ENCODE measurements at regions of chr19 and their contacts with region 1.

Region 1: DNA sequence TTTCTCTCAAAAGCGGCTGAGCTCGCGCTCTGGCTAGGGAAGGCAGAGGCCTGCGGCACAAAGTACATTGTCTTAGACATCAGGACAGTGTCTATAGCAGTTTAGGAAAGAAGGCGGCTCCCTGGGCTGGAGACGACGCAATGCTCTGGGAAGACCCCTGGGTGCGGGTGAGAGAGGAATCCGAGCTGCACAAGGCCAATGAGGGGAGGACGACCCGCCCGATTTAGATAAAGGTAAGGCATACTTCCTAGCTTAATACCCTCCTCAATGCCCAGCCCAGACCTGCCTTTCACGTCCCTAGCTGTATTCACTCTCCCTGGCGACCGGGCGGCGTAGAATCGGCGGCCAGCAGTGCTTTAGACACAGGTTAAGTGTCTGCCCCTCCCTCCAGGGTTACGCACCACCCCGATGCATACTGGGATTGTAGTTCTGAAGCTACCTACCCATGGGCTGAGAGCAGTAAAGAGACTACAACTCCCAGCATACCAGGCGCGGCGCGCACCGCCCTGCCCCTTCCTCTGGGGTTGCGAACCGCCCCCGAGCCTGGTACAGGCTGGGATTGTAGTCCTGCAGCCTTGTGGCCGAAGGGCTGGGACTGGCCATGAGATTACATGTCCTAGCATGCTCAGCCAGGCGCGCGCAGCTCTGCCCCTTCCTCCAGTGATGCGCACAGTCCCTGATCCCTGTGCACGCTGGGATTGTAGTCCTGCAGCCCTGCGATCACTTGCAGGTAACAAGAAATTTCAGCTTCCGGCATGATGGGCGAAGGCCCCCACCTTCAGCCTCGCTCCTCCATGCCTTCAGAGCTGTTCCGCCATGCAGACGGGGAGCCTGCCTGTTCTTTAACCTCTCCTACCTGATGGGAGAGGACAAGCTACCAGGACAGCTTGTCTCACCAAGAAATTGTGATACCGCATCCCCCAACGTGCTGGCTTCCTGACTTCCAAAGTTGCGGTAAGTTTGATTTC is 43.4 kb upstream of the ZNF14 start:
- DNase-seq: peak; percentile 79 to 95 (median 91)
- ATAC-seq: peak; percentile 100
- H3K4me3 ChIP-seq: peak overlapping the region; percentile 91
- H3K4me3 Mint-ChIP-seq: peak overlapping the region; percentile 91 to 100 (median 98)
- H3K27ac ChIP-seq: peak overlapping the region; percentile 84
- H3K27ac Mint-ChIP-seq: peak overlapping the region; percentile 88 to 99 (median 97)
- H3K4me1 ChIP-seq: peaks cover 11 to 20% of the 10 kb centered on the region in 2 donors
- H3K4me1 Mint-ChIP-seq: peaks cover 25 to 67% (median 54%) of the 10 kb centered on the region in 7 donors
- H3K27me3 ChIP-seq: no peaks in the 10 kb centered on the region
- H3K27me3 Mint-ChIP-seq: no peaks in the 10 kb centered on the region

Region 2: GRCh38 chr19:19138169-19138981 is 638.0 kb before region 1 on chr19 and contains the start of gene TMEM161A:
- CTCF ChIA-PET with region 1: no interaction called
- POLR2A ChIA-PET with region 1: no interaction called
- intact Hi-C with region 1: loop called in 1 of 2 experiments (anchors 5 kb)
- DNase-seq: peak; percentile 84 to 96 (median 93)
- ATAC-seq: peak; percentile 100
- H3K4me3 ChIP-seq: peak within 1 kb of the TSS; percentile 84
- H3K4me3 Mint-ChIP-seq: peak within 1 kb of the TSS; percentile 83 to 100 (median 98)
- H3K27ac ChIP-seq: peak within 1 kb of the TSS; percentile 90
- H3K27ac Mint-ChIP-seq: peak within 1 kb of the TSS; percentile 84 to 97 (median 94)
- H3K4me1 ChIP-seq: peaks cover 8 to 9% of the 10 kb centered on the region in 2 donors
- H3K4me1 Mint-ChIP-seq: peaks cover 20 to 41% (median 29%) of the 10 kb centered on the region in 7 donors
- H3K27me3 ChIP-seq: no peaks in the 10 kb centered on the region
- H3K27me3 Mint-ChIP-seq: no peaks in the 10 kb centered on the region
- total RNA-seq, gene TMEM161A: 15.8 to 32.7 (median 23.5) TPM

Region 3: DNA sequence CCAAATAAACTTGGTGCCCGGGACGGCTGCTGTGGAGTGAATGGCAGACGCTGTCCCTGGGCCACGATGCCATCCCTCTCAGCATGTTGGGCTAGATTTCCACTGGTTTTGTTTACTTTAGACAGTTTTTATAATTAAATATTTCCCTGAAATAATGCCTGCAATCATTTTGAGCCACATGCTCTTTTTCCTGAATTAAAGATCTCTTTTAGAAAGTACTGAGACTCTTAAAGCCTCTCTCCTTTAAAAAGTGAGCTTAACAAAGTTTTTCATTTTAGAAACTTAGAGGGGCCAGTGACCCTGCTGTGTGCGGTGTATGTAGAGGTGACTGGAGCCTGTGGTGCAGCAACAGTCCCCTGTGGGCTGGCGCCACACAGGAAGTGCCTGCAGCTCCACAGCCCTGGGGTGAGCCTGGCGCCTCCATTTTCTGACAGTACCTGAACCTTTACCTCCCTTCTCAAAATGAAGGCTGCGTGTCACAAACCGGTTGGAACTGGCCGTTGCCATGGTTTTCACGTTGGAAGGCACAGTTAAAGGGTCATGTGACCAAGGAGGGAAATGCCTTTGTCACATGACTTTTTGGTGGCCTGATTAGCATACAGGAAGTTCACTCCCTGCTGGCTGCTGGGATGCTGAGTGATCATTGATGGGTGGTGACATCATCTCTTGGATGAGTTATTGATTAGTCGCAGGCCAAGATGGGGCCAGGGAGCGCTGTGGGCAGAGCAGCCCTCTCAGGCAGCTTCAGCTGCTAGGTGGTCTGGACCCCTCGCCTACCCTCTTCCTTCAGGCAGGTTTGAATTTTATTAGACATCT is 287.2 kb before region 1 on chr19:
- CTCF ChIA-PET with region 1: no interaction called
- POLR2A ChIA-PET with region 1: no interaction called
- intact Hi-C with region 1: loop called in 1 of 2 experiments (anchors 1 kb)
- DNase-seq: peak; percentile 63 to 97 (median 94)
- ATAC-seq: peak; percentile 90
- H3K4me3 ChIP-seq: peak overlapping the region; percentile 22
- H3K4me3 Mint-ChIP-seq: peak overlapping the region; percentile 58 to 84 (median 78)
- H3K27ac ChIP-seq: peak overlapping the region; percentile 81
- H3K27ac Mint-ChIP-seq: peak overlapping the region; percentile 96 to 99 (median 99)
- H3K4me1 ChIP-seq: peaks cover 33 to 51% of the 10 kb centered on the region in 2 donors
- H3K4me1 Mint-ChIP-seq: peaks cover 27 to 61% (median 52%) of the 10 kb centered on the region in 7 donors
- H3K27me3 ChIP-seq: no peaks in the 10 kb centered on the region
- H3K27me3 Mint-ChIP-seq: no peaks in the 10 kb centered on the region

Region 4: DNA sequence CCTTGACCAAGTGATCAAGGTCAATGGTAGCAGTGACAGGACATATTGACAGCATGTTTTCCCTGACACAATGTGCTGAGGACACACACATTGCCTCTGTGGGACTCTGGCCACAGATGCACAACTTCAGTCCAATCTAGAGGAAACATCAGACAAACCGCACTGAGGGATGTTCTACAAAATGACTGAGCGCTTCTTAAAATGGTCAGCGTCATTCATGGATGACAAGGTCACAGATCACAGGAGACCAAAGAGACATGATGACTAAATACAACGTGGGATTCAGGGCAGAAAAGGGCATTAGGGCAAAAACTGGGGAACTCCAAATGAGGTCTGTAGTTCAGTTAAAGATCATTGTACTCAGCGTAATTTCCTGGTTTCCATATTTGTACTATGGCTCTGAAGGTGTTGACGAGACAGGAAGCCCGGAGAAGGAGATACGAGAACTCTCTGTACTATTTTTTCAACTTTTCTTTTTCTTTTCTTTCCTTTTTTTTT is 178.5 kb before region 1 on chr19:
- CTCF ChIA-PET with region 1: no interaction called
- POLR2A ChIA-PET with region 1: no interaction called
- intact Hi-C with region 1: loop called in 1 of 2 experiments (anchors 2 kb)
- DNase-seq: peak in 8 of 9 donors; percentile 54 to 90 (median 84)
- ATAC-seq: peak; percentile 87
- H3K4me3 ChIP-seq: peak overlapping the region; percentile 52
- H3K4me3 Mint-ChIP-seq: peak overlapping the region; percentile 61 to 85 (median 74)
- H3K27ac ChIP-seq: peak overlapping the region; percentile 96
- H3K27ac Mint-ChIP-seq: peak overlapping the region; percentile 90 to 99 (median 97)
- H3K4me1 ChIP-seq: peaks cover 53 to 54% of the 10 kb centered on the region in 2 donors
- H3K4me1 Mint-ChIP-seq: peaks cover 29 to 75% (median 66%) of the 10 kb centered on the region in 7 donors
- H3K27me3 ChIP-seq: no peaks in the 10 kb centered on the region
- H3K27me3 Mint-ChIP-seq: no peaks in the 10 kb centered on the region

Region 5: DNA sequence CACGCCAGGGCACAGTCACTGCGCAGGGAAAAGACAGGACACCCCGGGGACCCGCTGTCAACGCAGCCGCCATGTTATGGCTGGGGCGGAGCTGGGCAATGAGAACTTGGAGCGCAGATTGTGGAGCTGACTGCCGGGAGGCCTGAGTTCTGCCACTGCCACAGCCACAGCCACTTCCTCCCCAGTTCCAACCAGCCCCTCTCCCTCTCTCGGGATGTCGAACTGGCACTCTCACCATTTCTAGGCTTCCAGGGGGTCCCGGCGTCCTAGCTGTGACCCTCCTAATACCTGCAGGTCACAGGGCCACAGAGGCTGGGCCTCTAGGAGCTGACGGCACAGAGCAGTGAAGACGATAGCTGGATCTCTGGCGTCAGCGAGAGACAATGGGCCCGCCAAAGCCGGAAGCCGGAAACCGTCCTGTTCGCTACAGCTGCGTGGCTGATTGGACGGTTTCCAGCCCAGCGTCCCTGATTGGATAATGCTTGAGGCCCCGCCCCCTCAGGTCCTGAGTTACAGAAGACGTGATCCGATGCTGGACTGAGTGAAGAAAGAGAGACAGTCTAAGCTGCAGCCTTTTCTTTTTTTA is 45.1 kb after region 1 on chr19 and contains the start of gene ZNF506:
- CTCF ChIA-PET with region 1: no interaction called
- POLR2A ChIA-PET with region 1: interaction called, 48 read pairs
- intact Hi-C with region 1: loop called (anchors 1 kb)
- DNase-seq: peak; percentile 83 to 98 (median 97)
- ATAC-seq: peak; percentile 91
- H3K4me3 ChIP-seq: peak within 1 kb of the TSS; percentile 69
- H3K4me3 Mint-ChIP-seq: peak within 1 kb of the TSS; percentile 97 to 100 (median 99)
- H3K27ac ChIP-seq: peak within 1 kb of the TSS; percentile 98
- H3K27ac Mint-ChIP-seq: peak within 1 kb of the TSS; percentile 99 to 100 (median 100)
- H3K4me1 ChIP-seq: peaks cover 19 to 26% of the 10 kb centered on the region in 2 donors
- H3K4me1 Mint-ChIP-seq: peaks cover 9 to 52% (median 32%) of the 10 kb centered on the region in 7 donors
- H3K27me3 ChIP-seq: no peaks in the 10 kb centered on the region
- H3K27me3 Mint-ChIP-seq: no peaks in the 10 kb centered on the region
- total RNA-seq, gene ZNF506: 20.4 to 93.9 (median 55.7) TPM

Region 6: GRCh38 chr19:20051841-20052768 is 275.8 kb after region 1 on chr19:
- CTCF ChIA-PET with region 1: no interaction called
- POLR2A ChIA-PET with region 1: no interaction called
- intact Hi-C with region 1: loop called in 1 of 2 experiments (anchors 10 kb)
- DNase-seq: peak; percentile 17 to 50 (median 44)
- ATAC-seq: peak; percentile 93
- H3K4me3 ChIP-seq: peak overlapping the region; percentile 98
- H3K4me3 Mint-ChIP-seq: peak overlapping the region; percentile 95 to 100 (median 98)
- H3K27ac ChIP-seq: peak overlapping the region; percentile 77
- H3K27ac Mint-ChIP-seq: peak overlapping the region; percentile 83 to 97 (median 94)
- H3K4me1 ChIP-seq: peaks cover 8% of the 10 kb centered on the region in 2 donors
- H3K4me1 Mint-ChIP-seq: peaks cover 0 to 17% (median 8%) of the 10 kb centered on the region in 7 donors
- H3K27me3 ChIP-seq: no peaks in the 10 kb centered on the region
- H3K27me3 Mint-ChIP-seq: peaks cover 0 to 4% (median 0%) of the 10 kb centered on the region in 5 donors

Measured in naive thymus-derived CD4-positive, alpha-beta T cell (primary cell).